ENCODE measurements at regions of chr6 and their contacts with region 1.

Region 1: DNA sequence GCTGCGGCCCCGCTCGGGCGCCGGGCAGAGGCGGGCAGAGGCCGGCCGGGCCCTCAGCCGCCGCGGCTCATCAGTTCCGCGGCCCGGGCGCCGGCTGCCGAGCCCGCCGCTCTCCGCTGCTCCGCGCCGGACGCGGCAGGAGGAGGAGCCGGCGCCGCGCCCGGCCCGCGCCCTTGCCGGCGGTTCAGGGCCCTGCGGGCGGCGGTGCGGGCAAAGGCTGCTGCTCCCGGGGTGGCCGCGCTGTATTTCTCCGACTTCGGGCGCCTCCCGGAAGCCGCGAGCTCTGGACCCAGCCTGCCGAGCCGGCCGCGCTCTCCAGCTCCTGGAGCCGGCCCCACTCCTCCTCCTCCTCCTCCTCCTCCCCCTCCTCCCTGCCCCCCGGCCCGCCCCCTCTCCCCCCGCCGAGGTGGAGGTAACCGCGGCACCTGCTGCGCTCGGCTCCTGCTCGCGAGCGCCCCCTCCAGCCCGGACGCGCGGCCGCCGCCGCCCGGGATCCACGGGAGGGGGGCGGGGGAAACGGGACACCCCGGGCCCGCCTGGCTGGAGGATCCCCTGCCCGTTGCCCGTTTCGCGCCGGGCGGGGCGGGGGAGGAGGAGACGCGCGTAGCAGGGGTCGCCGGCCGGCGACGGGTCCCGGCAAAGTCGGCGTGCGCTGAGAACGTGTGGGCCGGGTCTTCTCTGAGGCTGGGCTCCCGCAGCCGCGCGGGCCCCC is at the start of gene SLC22A23:
- DNase-seq: peak; percentile 50 to 84 (median 74)
- ATAC-seq: peak; percentile 61
- H3K4me3 ChIP-seq: peak within 1 kb of the TSS; percentile 47 to 52
- H3K4me3 Mint-ChIP-seq: peak within 1 kb of the TSS; percentile 83
- H3K27ac ChIP-seq: no peak within 1 kb of the TSS
- H3K27ac Mint-ChIP-seq: peak within 1 kb of the TSS; percentile 58
- H3K4me1 ChIP-seq: peaks cover 22% of the 10 kb centered on the region
- H3K4me1 Mint-ChIP-seq: peaks cover 6% of the 10 kb centered on the region
- H3K27me3 ChIP-seq: peaks cover 0 to 24% of the 10 kb centered on the region in 2 experiments
- H3K27me3 Mint-ChIP-seq: peaks cover 14% of the 10 kb centered on the region
- CTCF ChIP-seq: peak; percentile 68
- total RNA-seq, gene SLC22A23: 3.4 to 4.8 TPM

Region 2: DNA sequence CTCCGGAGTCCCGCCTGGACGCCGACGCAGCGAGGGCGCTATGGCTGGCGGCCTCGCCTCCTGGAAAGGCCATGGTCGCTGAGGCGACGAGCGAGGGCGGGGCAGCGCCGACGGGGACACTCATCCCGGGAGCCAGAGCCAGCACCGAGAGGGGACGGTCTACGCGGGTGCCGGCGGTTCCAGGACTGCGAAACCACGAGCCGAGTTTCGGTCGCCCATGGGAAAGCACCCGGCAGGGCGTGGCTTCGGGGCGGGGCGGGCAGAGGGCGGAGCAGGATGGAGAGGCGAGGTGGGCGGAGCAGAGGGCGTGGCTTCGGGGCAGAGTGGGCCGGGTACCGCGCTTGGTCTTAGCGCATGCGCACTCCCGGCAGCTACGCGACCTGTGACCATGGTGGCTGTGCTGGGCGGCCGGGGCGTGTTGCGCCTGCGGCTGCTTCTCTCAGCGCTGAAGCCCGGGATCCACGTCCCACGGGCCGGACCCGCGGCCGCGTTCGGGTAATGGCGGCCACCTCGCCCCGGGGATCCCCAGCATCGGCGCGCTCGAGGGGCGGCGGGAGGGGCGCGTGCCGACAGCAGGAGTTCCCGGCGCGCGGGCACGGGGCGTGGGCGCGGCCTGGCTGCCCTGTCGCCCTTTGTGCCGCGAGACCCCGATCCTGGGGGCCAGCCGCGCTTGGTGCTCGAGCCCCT is 338.4 kb before region 1 on chr6 and contains the start of gene BPHL:
- CTCF ChIA-PET with region 1: no interaction called
- POLR2A ChIA-PET with region 1: no interaction called
- intact Hi-C with region 1: loop called in 1 of 2 experiments (anchors 5 kb)
- DNase-seq: peak; percentile 97 to 100 (median 99)
- ATAC-seq: peak; percentile 95
- H3K4me3 ChIP-seq: peak within 1 kb of the TSS; percentile 63 to 80
- H3K4me3 Mint-ChIP-seq: peak within 1 kb of the TSS; percentile 92
- H3K27ac ChIP-seq: peak within 1 kb of the TSS; percentile 85 to 90
- H3K27ac Mint-ChIP-seq: peak within 1 kb of the TSS; percentile 96
- H3K4me1 ChIP-seq: peaks cover 12% of the 10 kb centered on the region
- H3K4me1 Mint-ChIP-seq: peaks cover 13% of the 10 kb centered on the region
- H3K27me3 ChIP-seq: no peaks in the 10 kb centered on the region
- H3K27me3 Mint-ChIP-seq: no peaks in the 10 kb centered on the region
- CTCF ChIP-seq: no peak
- total RNA-seq, gene BPHL: 3.7 to 5.5 TPM

Region 3: GRCh38 chr6:3410385-3411360 is 46.2 kb before region 1 on chr6:
- CTCF ChIA-PET with region 1: interaction called, 3 read pairs
- POLR2A ChIA-PET with region 1: no interaction called
- intact Hi-C with region 1: loop called (anchors 1 kb)
- DNase-seq: peak; percentile 30 to 77 (median 68)
- ATAC-seq: peak; percentile 70
- H3K4me3 ChIP-seq: no peak overlapping the region
- H3K4me3 Mint-ChIP-seq: no peak overlapping the region
- H3K27ac ChIP-seq: no peak overlapping the region
- H3K27ac Mint-ChIP-seq: no peak overlapping the region
- H3K4me1 ChIP-seq: peaks cover 6% of the 10 kb centered on the region
- H3K4me1 Mint-ChIP-seq: peaks cover 10% of the 10 kb centered on the region
- H3K27me3 ChIP-seq: no peaks in the 10 kb centered on the region
- H3K27me3 Mint-ChIP-seq: no peaks in the 10 kb centered on the region
- CTCF ChIP-seq: peak; percentile 60

Region 4: DNA sequence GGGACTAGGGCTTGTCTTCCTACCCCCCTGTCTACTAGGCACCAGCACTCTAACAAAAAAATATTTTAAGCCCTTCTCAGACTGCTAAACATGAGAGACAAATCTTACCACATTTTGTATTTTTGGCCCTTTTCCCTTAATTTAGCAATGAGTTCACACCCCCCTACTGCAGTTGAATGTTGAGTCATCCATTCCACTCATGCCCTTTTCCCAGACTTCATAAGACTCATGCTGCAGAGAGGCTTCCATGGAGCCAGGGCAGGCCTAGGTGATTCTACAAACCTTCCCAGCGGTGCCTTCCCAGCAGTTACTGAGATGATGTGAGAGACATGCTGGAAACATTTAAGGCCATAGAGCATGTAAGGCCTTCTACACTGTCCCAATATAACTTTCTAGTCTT is 240.7 kb after region 1 on chr6:
- CTCF ChIA-PET with region 1: no interaction called
- POLR2A ChIA-PET with region 1: no interaction called
- intact Hi-C with region 1: no loop called
- DNase-seq: no peak
- ATAC-seq: no peak
- H3K4me3 ChIP-seq: no peak overlapping the region
- H3K4me3 Mint-ChIP-seq: no peak overlapping the region
- H3K27ac ChIP-seq: no peak overlapping the region
- H3K27ac Mint-ChIP-seq: no peak overlapping the region
- H3K4me1 ChIP-seq: no peaks in the 10 kb centered on the region
- H3K4me1 Mint-ChIP-seq: peaks cover under 1% of the 10 kb centered on the region
- H3K27me3 ChIP-seq: no peaks in the 10 kb centered on the region
- H3K27me3 Mint-ChIP-seq: peaks cover 3% of the 10 kb centered on the region
- CTCF ChIP-seq: no peak

Region 5: GRCh38 chr6:3977875-3978711 is 521.2 kb after region 1 on chr6:
- CTCF ChIA-PET with region 1: no interaction called
- POLR2A ChIA-PET with region 1: no interaction called
- intact Hi-C with region 1: no loop called
- DNase-seq: peak; percentile 10 to 78 (median 44)
- ATAC-seq: peak; percentile 99
- H3K4me3 ChIP-seq: peak overlapping the region in 1 of 2 experiments; percentile 6
- H3K4me3 Mint-ChIP-seq: peak overlapping the region; percentile 47
- H3K27ac ChIP-seq: no peak overlapping the region
- H3K27ac Mint-ChIP-seq: no peak overlapping the region
- H3K4me1 ChIP-seq: peaks cover 7% of the 10 kb centered on the region
- H3K4me1 Mint-ChIP-seq: peaks cover 11% of the 10 kb centered on the region
- H3K27me3 ChIP-seq: no peaks in the 10 kb centered on the region
- H3K27me3 Mint-ChIP-seq: no peaks in the 10 kb centered on the region
- CTCF ChIP-seq: peak; percentile 64